ENCODE measurements at regions of chr9 and their contacts with region 1.

Region 1: GRCh38 chr9:125558453-125559092 is 148.4 kb downstream of the MAPKAP1 start:
- DNase-seq: no peak
- H3K4me3 ChIP-seq: no peak overlapping the region
- CTCF ChIP-seq: peak; percentile 74

Region 2: DNA sequence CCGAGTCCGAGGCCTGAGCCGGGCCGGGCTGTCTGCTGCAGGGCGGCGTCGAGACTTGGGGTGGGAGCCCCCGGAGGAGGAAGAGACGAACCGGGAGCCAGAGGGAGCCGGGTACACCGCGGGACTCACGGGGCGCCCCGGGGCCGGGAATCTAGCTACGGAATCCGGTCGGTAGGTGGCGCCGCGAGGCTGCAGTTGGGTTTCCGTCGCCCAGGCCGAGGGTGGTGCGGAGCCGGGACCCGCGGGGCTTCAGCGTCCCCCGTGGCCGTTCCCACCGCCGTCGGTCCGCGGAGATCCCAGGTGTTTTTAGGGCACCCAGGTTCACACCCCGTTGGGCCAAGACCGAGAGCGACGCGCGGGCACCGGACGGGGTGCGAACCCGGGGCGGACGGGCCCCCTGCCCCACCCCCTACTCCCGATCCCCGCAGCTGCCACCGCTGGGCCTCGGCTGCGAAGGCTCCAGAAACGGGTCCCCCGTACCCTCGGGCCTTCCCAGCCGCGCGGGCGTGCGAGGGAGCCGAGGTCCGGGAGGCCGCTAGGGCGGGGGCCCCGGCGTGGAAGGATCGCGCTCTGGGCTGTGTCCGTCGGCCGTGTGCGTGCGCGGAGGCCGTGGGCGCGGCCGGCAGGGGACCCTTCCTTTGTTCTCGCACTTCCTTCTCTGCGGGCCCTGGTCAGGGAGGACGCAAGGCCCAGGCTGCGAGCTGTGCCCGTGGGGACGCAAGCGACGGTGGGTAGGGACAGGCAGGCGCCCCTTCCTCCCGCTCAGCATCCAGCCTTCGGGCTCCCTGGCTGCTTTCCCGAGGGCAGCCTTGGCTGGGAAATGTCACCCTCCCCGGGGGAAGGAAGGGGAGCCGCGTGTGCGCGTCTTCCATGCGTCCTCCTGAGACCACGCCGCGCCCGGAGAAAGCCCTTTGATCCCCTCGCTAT is 150.3 kb before region 1 on chr9:
- CTCF ChIA-PET with region 1: interaction called, 10 read pairs
- POLR2A ChIA-PET with region 1: no interaction called
- DNase-seq: no peak
- H3K4me3 ChIP-seq: peak overlapping the region; percentile 67
- CTCF ChIP-seq: peak; percentile 93

Region 3: DNA sequence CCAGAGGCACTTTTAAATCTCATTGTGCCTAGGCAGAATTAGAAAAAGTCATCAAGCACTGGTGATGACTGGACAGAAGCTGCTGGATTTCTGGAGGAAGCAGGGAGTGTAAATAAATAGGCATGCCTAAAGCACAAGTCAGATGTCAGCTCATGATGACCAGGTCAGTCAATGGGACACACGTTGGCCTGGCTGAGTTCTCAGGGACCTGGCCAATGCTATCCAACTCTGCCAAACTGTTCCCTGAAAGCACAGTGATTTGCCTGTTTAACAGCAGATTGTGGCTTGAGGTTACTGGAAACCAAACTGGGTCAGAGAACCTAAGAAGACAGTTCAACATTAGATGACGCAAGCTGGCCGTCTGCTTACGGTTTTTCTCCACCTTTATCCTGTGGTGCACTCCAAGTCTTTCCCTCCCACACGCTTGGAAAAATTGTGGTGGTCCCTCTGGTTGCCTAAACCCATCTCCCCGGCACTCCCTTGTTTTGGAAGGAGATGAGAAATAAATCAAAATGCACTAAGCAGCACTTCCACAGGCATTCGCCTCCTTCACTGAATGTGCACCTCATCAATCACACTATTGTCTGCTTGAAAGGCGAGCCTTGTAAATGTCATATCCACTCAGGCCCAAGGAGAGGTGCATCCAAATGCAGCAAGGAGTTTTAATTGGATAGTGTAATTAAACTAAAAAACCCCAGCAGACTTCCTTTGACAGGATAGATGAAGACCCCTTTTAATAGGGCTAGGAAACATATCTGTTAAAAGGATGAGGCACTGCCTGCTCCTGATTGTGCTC is 97.5 kb before region 1 on chr9:
- CTCF ChIA-PET with region 1: no interaction called
- POLR2A ChIA-PET with region 1: no interaction called
- DNase-seq: no peak
- H3K4me3 ChIP-seq: no peak overlapping the region
- CTCF ChIP-seq: no peak

Region 4: DNA sequence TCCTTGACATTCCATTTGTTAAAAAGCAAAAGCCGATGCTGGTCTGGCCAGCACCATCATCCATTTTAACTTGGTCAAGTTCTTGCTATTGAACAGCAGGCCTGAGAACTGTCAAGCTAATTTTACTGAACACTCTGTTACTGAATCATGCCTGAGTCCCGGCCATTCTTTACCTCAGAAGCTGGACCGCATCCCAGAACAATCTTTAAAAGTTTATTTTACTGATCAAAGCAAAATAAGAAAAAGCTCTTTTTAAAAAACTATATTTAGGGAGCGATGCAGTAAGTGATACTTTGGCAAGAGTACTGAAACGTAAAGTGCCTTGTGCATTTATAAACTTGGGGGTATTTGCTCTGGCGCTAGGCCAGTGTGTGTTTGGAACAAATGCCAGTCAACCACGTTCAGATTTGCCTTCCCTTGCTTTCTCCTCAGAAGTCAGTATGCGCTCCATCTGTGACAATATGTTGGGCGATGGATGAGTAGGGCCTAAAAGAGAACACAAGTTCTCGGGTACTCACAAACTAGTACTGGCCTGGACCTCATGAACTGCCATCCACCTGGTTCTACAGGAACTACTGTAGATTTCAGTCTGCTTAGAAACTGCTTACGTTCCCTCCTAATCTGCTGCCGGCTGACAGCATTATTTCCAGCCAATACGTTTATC is 13.5 kb before region 1 on chr9:
- CTCF ChIA-PET with region 1: interaction called, 20 read pairs
- POLR2A ChIA-PET with region 1: no interaction called
- DNase-seq: no peak
- H3K4me3 ChIP-seq: no peak overlapping the region
- CTCF ChIP-seq: no peak

Region 5: GRCh38 chr9:125574126-125574877 is 15.7 kb after region 1 on chr9:
- CTCF ChIA-PET with region 1: interaction called, 36 read pairs
- POLR2A ChIA-PET with region 1: no interaction called
- DNase-seq: no peak
- H3K4me3 ChIP-seq: no peak overlapping the region
- CTCF ChIP-seq: no peak

Region 6: DNA sequence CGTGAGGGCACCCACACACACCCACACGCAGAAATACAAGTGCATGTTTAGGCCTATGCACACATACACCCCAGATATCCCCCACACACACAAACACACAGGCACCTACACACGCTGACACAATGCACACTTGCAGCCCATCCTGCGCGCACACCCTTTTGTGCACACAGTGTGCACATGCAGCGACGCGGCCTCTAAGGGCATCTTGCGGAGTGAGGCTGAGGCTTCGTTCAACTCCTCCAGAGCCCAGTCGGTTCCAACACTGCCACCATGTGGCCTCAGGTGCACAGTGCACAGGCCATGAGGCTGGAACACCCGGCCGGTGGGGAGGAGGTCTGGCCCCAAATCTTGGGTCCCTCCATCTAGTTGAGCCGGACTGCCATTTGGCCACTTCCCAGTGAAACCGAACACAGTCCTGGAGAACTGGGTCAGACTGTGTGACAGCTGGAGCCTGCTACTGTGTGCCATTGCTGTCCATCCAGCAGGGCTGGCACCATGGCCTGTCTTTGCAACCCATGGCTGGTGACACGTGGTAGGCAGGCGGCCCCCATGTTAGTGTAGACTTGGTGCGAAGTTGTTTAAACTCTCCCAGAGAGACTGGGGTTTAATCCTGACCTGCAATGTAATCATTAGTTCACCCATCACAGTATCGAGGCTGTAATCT is 670.3 kb after region 1 on chr9:
- CTCF ChIA-PET with region 1: interaction called, 15 read pairs
- POLR2A ChIA-PET with region 1: no interaction called
- DNase-seq: no peak
- H3K4me3 ChIP-seq: no peak overlapping the region
- CTCF ChIP-seq: peak; percentile 96